Activated T-helper 2 cell treated with anti-CD3 and anti-CD28 coated beads, Interferon-gamma antibody, Interleukin-2, Interleukin-4, amounts not matched to agents 10 μg/mL and 5 μg/mL and 100 μg/mL, durations not matched to agents 14 hours and 24 hours and 36 hours (primary cell): ENCODE measurements at regions of chr10 and their contacts with region 1.

Region 1: DNA sequence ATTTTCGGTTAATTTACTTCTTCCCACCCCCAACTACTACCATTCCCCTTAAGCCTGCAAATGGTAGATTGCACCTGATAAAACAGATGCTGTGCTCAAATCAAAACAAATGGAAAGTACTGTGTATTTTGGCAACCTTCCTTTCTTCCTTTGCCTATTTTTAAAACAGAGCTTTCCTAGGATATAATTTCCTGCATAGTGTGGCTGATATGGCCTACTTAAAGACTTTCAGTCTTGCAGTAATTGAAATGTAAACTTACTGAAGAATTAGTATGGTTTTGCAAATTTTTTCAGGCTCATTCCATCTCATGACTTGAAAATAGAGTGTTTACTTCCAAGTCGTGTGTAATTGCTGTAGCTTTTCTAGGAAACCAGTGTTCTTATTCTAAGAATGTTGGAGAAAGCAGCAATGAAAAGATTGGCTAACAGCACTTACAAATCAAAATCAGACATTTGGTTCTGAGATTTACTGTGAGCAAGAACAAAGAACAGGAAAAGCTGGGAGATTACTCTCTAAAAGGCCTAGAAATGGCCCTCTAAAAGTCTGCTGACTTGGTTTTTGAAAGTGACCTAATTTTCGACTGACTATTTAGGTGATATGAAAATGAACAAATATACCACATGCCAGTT is 52.0 kb downstream of the REEP3 start:
- DNase-seq: no peak
- H3K4me3 Mint-ChIP-seq: no peak overlapping the region
- H3K27ac Mint-ChIP-seq: peak overlapping the region; percentile 12
- H3K4me1 Mint-ChIP-seq: peaks cover 13% of the 10 kb centered on the region
- H3K27me3 Mint-ChIP-seq: no peaks in the 10 kb centered on the region

Region 2: DNA sequence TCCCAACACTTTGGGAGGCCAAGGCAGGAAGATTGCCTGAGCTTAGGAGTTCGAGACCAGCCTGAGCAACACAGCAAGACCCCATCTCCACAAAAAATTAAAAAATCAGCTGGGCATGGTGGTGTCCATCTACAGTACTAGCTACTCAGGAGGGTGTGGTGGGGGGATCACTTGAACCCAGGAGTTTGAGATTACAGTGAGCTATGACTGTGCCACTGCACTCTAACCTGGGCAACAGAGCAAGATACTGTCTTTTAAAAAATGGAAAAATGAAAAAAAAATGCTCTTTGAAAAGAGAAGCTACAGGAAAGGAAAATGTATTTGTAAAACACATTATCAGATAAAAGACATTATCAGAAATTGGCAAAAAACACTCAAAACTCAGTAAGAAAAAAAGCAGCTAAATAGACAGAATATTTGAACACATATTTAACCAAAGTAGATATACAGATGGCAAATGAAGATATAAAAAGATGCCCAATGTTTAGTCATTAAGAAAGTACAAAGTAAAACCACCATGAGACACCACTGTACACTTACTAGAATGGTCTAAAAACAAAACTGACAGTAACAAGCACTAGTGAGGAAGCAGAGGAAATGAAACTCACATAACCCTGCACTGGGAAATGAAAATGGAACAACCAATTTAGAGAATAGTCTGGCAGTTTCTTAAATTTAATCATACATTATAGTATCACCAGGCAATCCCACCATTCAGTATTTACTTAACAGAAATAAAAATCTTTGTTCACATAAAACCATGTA is 399.5 kb before region 1 on chr10:
- intact Hi-C with region 1: loop called (anchors 5 kb)
- DNase-seq: no peak
- H3K4me3 Mint-ChIP-seq: no peak overlapping the region
- H3K27ac Mint-ChIP-seq: peak overlapping the region; percentile 29
- H3K4me1 Mint-ChIP-seq: peaks cover 55% of the 10 kb centered on the region
- H3K27me3 Mint-ChIP-seq: no peaks in the 10 kb centered on the region

Region 3: DNA sequence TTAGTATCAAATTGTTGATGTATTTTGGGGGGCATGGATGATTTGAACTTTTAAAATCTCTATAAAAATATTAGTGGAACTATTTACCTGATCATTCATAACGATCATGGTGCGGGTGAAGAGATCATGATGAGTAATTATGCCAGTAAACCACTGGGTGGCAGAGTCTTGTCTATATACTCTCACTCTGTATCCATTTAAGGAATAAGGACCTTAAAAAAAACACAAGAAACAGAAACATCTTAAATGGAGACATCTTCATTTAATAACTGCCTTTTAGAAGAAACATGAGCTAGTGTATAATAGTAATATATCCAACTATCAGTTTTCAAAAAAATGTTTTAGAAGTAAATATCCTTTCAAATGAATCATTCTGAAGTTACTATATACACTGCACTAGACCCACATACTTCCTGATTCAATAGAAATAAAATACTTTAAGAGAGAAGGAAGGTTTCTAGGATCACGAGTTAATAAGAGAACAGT is 356.0 kb before region 1 on chr10:
- intact Hi-C with region 1: loop called (anchors 5 kb)
- DNase-seq: no peak
- H3K4me3 Mint-ChIP-seq: no peak overlapping the region
- H3K27ac Mint-ChIP-seq: no peak overlapping the region
- H3K4me1 Mint-ChIP-seq: peaks cover 39% of the 10 kb centered on the region
- H3K27me3 Mint-ChIP-seq: no peaks in the 10 kb centered on the region

Region 4: DNA sequence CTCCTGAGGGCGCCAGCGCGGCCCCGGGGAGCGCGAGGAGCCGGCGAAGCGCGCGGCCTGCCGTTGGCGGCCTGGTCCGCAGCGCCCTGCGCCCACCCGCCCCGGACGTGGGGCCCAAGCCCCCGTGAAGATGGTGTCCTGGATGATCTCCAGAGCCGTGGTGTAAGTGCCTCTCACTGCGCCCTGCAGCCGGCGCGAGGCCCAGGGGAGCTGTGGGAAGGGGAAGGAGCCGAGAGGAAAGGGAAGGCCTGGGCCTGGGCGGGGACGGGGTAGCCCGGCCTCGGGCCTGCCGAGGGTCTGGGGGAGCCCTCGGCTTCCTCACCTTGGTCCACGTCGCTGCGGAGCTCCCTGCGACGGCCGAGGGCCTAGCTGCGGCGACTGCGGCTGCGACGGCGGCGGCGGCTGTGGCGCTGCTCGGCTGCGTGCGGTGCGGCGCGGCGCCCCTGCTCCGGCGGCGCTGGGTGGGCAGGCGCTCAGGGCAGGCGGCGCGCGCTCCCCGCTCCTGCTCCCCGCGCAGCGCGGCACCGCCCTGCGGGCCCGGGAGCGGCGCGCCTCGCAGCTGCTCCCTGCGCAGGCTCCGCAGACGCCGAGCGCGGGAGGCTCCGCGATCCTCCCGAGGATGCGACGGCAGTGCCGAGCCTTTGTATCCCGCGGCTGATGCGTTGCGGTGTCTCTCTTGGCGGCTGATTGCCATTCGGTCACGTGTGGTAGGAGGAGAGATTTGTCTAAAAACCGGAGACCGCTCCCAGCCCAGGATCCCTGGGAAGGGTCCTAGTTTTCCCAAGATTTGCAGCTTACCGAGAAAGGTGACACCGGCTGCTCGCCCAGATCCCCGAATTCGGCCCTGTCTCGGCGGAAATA is 51.5 kb before region 1 on chr10:
- intact Hi-C with region 1: loop called (anchors 1 kb)
- DNase-seq: peak; percentile 42
- H3K4me3 Mint-ChIP-seq: peak overlapping the region; percentile 79
- H3K27ac Mint-ChIP-seq: peak overlapping the region; percentile 81
- H3K4me1 Mint-ChIP-seq: peaks cover 51% of the 10 kb centered on the region
- H3K27me3 Mint-ChIP-seq: no peaks in the 10 kb centered on the region

Region 5: GRCh38 chr10:63614371-63614891 is 41.2 kb after region 1 on chr10:
- intact Hi-C with region 1: loop called (anchors 5 kb)
- DNase-seq: no peak
- H3K4me3 Mint-ChIP-seq: no peak overlapping the region
- H3K27ac Mint-ChIP-seq: no peak overlapping the region
- H3K4me1 Mint-ChIP-seq: peaks cover 7% of the 10 kb centered on the region
- H3K27me3 Mint-ChIP-seq: no peaks in the 10 kb centered on the region